AG04450 (cell line): ENCODE measurements at regions of chr6 and their contacts with region 1.

Region 1: DNA sequence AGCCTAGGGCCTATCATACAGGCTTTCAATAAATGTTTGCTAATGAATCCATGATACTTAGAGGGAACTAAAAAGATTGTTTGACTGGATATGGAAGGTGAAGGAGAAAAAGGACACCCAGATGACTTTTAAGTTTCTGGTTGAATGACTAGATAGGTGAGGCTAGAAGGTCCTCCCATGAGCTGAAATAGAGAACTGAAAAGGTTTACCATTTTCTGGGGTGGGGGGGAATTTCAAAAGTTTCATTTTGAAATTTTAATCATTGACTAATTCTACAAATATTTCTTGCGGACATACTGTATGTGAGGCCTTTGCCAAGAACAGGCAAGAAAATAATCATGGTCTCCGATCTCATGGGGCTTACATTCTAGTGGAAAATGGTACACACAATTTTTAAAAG is 17.9 kb upstream of the ZBTB2 start:
- DNase-seq: no peak
- H3K4me3 ChIP-seq: no peak overlapping the region
- H3K27ac ChIP-seq: no peak overlapping the region
- H3K27me3 ChIP-seq: no peaks in the 10 kb centered on the region
- CTCF ChIP-seq: no peak

Region 2: DNA sequence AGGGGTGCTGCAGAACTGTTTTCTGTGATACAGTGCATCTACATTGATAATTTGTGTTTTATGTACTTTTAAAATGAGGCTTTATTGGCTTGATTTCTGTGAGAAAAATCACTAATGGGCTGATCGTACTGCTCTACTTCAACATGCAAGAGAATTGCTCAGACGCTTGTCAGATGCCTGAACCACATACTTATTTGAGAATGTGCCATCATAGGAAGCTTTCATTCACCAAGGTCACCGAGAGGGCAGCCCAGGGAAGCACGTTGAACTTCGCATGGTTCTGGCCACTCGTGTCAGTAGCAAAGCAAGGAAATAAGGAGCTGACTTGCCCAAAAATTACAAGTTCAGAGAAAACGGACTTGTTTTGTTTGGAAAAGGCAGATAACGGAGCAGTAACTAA is 338.0 kb before region 1 on chr6:
- CTCF ChIA-PET with region 1: no interaction called
- POLR2A ChIA-PET with region 1: no interaction called
- DNase-seq: peak; percentile 30
- H3K4me3 ChIP-seq: peak overlapping the region; percentile 40
- H3K27ac ChIP-seq: no peak overlapping the region
- H3K27me3 ChIP-seq: no peaks in the 10 kb centered on the region
- CTCF ChIP-seq: no peak

Region 3: DNA sequence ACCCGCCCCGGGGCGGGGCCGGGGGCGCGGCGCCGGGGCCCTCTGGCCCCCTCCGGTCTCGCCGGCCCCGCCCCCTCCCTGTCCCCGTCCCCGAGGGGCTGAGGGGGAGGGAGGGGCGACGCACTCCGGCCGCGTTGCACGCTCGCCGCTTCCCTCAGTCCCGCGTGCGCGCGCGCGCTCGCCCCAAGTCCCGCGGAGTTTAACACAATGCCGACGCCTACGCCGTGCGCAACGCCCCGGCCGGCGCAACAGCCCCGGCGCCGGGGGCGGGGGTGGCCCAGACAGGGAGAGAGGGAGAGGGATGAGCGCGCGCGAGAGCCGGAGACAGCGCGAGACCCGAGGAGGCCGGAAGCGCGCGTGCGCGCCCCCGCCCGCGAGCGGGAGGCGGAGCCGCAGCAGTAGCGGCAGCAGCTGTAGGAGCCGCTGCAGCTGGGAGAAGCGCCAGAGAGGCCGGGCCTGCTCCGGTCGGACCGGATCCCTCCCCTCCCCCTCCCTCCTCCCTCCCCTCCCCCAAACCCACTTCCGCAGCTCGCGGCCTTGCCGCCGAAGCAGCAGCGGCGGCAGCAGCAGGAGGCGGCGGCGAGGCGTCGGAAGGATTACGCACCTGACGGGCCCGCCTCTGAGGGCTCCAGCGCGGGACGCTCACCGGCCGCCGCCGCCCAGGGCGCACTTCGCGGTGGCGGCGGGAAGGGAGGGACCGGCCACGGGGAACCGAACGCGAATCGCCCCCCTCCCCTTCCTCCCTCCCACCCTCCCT is 18.8 kb before region 1 on chr6:
- CTCF ChIA-PET with region 1: interaction called, 29 read pairs
- POLR2A ChIA-PET with region 1: interaction called, 5 read pairs
- DNase-seq: peak; percentile 94
- H3K4me3 ChIP-seq: peak overlapping the region; percentile 72
- H3K27ac ChIP-seq: peak overlapping the region; percentile 75
- H3K27me3 ChIP-seq: no peaks in the 10 kb centered on the region
- CTCF ChIP-seq: no peak

Region 4: DNA sequence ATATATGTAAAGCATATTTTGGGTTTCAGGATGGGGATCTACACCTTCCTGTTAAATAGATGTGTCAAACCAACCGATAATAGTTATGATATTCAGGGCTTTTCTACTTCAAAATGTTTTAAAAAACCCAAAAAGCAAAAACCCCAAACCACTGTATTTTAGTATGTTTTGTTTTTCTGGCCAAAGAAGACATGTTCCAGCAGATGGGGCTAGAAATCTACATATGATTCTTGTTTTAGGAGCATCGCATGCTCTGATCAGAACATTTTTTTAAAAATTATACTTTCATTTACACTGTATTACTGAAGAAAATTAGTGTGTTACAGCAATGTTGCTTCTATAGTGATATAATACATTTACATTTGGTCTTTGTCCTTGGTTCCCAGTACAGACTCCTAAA is 31.7 kb after region 1 on chr6:
- CTCF ChIA-PET with region 1: interaction called, 10 read pairs
- POLR2A ChIA-PET with region 1: no interaction called
- DNase-seq: no peak
- H3K4me3 ChIP-seq: no peak overlapping the region
- H3K27ac ChIP-seq: no peak overlapping the region
- H3K27me3 ChIP-seq: no peaks in the 10 kb centered on the region
- CTCF ChIP-seq: peak; percentile 53

Region 5: GRCh38 chr6:152170705-152171667 is 761.7 kb after region 1 on chr6:
- CTCF ChIA-PET with region 1: no interaction called
- POLR2A ChIA-PET with region 1: no interaction called
- DNase-seq: peak; percentile 21
- H3K4me3 ChIP-seq: no peak overlapping the region
- H3K27ac ChIP-seq: peak overlapping the region; percentile 25
- H3K27me3 ChIP-seq: no peaks in the 10 kb centered on the region
- CTCF ChIP-seq: no peak